ENCODE measurements at regions of chrX and their contacts with region 1.

Region 1: DNA sequence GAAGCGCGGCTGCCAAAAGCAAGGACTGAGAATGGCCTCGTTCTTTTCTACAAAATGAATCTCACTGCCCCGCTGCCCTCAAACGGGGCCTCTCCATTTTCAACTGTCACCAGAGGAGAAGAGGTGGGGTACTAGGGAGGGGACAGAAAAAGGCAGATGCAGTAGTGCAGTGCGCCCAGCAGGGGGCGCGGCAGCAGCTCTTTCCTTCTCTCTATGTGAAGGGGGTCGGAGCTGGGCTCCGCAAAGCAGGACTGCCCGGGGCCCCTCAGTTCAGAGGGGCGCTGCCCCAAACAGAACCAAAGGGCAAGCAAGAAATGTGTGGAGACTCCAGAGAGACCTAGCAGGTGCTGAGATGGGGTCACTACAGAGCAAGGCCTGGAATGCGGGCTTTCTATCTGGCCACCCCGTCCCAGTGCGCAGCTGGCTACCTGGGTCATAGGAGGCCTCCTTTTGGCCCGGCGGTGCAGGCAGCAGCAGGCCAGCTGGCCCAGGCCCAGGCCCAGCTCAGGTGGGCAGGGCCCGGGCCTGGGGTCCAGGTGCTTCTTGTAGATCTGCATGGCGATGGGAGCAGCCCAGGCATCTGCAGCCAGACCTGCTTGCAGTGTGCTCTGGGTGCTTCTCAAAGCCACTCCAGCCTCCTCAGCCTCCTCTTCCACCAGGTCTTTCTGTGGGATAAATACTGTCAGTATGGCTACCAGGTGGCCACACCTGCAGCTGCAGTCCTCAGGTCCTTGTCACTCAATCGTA is 5.9 kb downstream of the IRAK1 start:
- DNase-seq: peak; percentile 56
- ATAC-seq: peak; percentile 73
- H3K4me3 Mint-ChIP-seq: no peak overlapping the region
- H3K27ac Mint-ChIP-seq: peak overlapping the region; percentile 34
- H3K4me1 Mint-ChIP-seq: peaks cover 21% of the 10 kb centered on the region
- H3K27me3 Mint-ChIP-seq: no peaks in the 10 kb centered on the region

Region 2: GRCh38 chrX:153744214-153744724 is 269.5 kb before region 1 on chrX:
- CTCF ChIA-PET with region 1: no interaction called
- POLR2A ChIA-PET with region 1: no interaction called
- DNase-seq: no peak
- ATAC-seq: no peak
- H3K4me3 Mint-ChIP-seq: no peak overlapping the region
- H3K27ac Mint-ChIP-seq: no peak overlapping the region
- H3K4me1 Mint-ChIP-seq: peaks cover 25% of the 10 kb centered on the region
- H3K27me3 Mint-ChIP-seq: peaks cover 2% of the 10 kb centered on the region

Region 3: DNA sequence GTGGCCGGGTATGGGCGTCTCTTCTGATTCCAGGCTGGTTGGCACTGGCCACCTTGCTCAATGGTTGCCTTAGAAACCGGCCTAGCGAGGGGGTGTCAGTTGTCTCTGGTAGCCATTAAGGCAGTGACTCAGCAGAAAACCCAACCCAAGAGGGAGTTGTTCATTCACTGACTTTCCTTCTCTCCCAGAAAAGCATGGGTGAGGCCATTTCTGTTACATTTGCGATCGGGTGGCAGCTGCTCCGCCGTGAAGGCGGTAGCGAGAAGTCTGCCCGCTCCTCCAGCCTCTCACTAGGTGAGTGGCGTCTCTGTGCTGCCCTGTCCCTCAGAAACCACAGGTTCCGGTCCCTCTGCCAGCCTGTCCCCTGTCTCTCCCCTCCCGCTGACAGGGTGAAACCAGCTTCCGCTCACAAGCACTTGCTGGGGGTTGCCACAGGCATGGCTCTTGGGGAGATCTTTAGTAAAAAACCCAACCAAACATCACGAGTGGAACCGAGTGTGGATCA is 11.5 kb before region 1 on chrX:
- CTCF ChIA-PET with region 1: interaction called, 24 read pairs
- POLR2A ChIA-PET with region 1: interaction called, 11 read pairs
- DNase-seq: peak; percentile 67
- ATAC-seq: peak; percentile 90
- H3K4me3 Mint-ChIP-seq: peak overlapping the region; percentile 57
- H3K27ac Mint-ChIP-seq: peak overlapping the region; percentile 88
- H3K4me1 Mint-ChIP-seq: peaks cover 15% of the 10 kb centered on the region
- H3K27me3 Mint-ChIP-seq: no peaks in the 10 kb centered on the region

Region 4: DNA sequence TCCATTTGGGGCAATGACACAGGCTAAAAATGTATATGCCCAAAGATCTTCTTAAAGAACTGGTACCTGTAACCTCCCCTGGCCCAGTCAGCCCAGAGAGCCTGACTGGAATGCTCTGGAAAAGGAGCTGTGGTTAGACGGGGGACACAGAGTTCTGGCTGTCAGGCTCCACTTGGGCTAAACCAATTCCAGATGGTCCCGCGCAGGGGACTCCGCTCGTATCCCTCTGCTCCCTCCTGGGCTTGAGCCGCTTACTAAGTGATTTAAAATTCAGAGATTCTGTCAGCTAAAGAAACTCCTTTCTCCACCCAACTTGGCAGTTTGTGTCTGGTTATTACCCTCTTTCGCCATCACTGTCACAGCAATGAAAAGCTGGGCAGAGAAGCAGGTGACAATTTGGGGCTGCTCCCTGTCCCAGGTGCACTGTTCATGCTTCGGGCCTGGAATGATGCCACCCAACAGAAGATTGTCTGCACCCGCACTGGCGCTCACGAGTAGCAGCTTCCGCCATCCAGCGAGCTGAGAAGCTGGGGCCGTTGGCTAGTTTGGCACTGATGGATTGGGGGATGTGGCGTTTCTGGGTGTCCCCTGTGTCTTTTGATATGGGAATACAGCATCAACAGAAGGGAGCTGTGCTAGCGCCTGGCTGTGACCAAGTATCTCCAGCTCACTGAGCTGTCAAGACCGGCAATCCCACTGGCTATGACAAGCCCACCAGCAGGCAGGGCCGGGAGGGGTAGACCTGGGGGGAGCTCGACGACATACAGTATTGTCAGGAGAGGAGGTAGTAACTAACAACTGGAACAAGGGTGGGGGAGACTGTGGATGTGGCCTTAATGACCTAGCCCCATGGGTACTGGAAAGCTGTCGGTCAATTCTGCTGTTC is 12.6 kb after region 1 on chrX:
- CTCF ChIA-PET with region 1: interaction called, 14 read pairs
- POLR2A ChIA-PET with region 1: no interaction called
- DNase-seq: no peak
- ATAC-seq: no peak
- H3K4me3 Mint-ChIP-seq: no peak overlapping the region
- H3K27ac Mint-ChIP-seq: no peak overlapping the region
- H3K4me1 Mint-ChIP-seq: peaks cover 8% of the 10 kb centered on the region
- H3K27me3 Mint-ChIP-seq: no peaks in the 10 kb centered on the region